PC-3 (cell line): ENCODE measurements at regions of chr3 and their contacts with region 1.

Region 1: GRCh38 chr3:169562992-169563774 is 100.3 kb downstream of the MECOM start:
- DNase-seq: peak; percentile 24
- ATAC-seq: peak; percentile 76
- H3K4me3 ChIP-seq: no peak overlapping the region
- H3K27ac ChIP-seq: no peak overlapping the region
- H3K4me1 ChIP-seq: no peaks in the 10 kb centered on the region
- H3K27me3 ChIP-seq: no peaks in the 10 kb centered on the region
- CTCF ChIP-seq: peak; percentile 41

Region 2: GRCh38 chr3:169545606-169546005 is 17.6 kb before region 1 on chr3:
- CTCF ChIA-PET with region 1: no interaction called
- POLR2A ChIA-PET with region 1: no interaction called
- intact Hi-C with region 1: loop called (anchors 1 kb)
- DNase-seq: no peak
- ATAC-seq: no peak
- H3K4me3 ChIP-seq: no peak overlapping the region
- H3K27ac ChIP-seq: no peak overlapping the region
- H3K4me1 ChIP-seq: 0 out of 2 replicates have a peak, but pooled peaks cover 3% of the 10 kb centered on the region
- H3K27me3 ChIP-seq: no peaks in the 10 kb centered on the region
- CTCF ChIP-seq: no peak